HEK293 (cell line): ENCODE measurements at regions of chr17 and their contacts with region 1.

Region 1: DNA sequence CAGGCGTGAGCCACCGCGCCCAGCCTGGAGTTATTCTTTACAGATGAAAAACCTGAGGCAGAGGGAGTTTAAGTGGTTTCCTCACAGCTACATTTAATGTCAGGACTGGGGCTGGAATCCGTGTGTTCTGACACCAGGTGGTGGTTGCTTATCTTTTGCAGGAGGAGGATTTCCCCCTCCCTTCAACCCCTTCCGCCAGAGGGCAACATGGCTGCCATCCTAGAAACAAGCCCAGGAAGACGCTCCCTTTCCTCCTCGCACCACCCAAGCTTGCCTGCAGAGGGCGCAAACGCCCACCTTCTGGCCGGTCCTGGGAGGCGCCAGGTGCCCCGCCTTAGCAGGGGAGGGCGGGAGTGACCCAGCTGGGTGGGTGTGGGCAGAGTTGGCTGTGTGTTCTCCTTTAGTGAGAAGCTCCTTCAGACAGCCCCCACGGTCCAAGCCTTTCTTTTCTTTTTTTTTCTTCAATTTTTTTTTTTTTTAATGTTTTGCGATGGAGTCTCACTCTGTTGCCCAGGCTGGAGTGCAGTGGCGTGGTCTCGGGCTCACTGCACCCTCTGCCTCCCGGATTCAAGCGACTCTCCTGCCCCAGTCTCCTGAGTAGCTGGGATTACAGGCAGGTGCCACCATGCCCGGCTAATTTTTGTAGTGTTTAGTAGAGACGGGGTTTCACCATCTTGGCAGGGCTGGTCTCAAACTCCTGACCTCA is 9.9 kb upstream of the RAP1GAP2 start:
- H3K4me3 ChIP-seq: no peak overlapping the region
- H3K27ac ChIP-seq: no peak overlapping the region
- H3K4me1 ChIP-seq: no peaks in the 10 kb centered on the region
- CTCF ChIP-seq: peak; percentile 96

Region 2: DNA sequence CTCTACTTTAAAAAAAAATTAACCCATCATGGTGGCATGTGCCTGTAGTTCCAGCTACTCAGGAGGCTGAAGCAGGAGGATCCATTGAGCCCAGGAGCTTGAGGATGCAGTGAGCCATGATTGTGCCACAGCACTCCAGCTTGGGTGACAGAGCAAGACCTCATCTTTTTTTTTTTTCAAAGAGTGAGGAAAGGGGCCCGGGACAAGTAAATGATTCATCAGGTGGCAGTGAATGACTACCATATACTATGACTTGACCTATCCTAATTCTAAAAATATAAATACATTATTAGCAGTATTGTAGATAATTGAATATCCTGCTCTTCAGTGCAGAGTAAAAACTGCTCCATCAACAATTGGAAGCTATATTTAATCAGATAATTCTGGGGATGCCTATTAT is 130.0 kb before region 1 on chr17:
- CTCF ChIA-PET with region 1: no interaction called
- POLR2A ChIA-PET with region 1: no interaction called
- H3K4me3 ChIP-seq: no peak overlapping the region
- H3K27ac ChIP-seq: no peak overlapping the region
- H3K4me1 ChIP-seq: peaks cover 9% of the 10 kb centered on the region
- CTCF ChIP-seq: no peak

Region 3: DNA sequence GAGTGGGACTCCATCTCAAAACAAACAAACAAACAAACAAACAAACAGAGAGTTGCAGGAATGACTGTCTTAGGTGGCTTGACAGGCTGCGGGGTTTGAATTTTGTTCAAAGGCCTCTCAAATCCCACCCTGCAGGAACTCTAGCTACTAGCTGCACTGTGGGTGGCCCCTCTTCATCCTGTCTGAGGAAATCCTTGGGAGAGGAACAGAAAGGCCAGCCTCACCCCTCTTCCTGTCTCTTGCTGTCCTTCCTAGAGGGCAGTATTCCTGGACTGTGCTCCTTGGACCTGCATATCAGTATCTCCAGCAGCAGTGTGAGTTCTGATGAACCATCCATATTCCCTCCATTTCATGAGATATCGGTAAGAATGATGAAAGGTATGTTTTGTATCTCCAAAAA is 34.8 kb before region 1 on chr17:
- CTCF ChIA-PET with region 1: no interaction called
- POLR2A ChIA-PET with region 1: no interaction called
- H3K4me3 ChIP-seq: no peak overlapping the region
- H3K27ac ChIP-seq: no peak overlapping the region
- H3K4me1 ChIP-seq: peaks cover 3% of the 10 kb centered on the region
- CTCF ChIP-seq: no peak

Region 4: GRCh38 chr17:2801841-2802240 is 15.5 kb after region 1 on chr17:
- CTCF ChIA-PET with region 1: interaction called, 11 read pairs
- POLR2A ChIA-PET with region 1: no interaction called
- H3K4me3 ChIP-seq: no peak overlapping the region
- H3K27ac ChIP-seq: no peak overlapping the region
- H3K4me1 ChIP-seq: no peaks in the 10 kb centered on the region
- CTCF ChIP-seq: no peak

Region 5: DNA sequence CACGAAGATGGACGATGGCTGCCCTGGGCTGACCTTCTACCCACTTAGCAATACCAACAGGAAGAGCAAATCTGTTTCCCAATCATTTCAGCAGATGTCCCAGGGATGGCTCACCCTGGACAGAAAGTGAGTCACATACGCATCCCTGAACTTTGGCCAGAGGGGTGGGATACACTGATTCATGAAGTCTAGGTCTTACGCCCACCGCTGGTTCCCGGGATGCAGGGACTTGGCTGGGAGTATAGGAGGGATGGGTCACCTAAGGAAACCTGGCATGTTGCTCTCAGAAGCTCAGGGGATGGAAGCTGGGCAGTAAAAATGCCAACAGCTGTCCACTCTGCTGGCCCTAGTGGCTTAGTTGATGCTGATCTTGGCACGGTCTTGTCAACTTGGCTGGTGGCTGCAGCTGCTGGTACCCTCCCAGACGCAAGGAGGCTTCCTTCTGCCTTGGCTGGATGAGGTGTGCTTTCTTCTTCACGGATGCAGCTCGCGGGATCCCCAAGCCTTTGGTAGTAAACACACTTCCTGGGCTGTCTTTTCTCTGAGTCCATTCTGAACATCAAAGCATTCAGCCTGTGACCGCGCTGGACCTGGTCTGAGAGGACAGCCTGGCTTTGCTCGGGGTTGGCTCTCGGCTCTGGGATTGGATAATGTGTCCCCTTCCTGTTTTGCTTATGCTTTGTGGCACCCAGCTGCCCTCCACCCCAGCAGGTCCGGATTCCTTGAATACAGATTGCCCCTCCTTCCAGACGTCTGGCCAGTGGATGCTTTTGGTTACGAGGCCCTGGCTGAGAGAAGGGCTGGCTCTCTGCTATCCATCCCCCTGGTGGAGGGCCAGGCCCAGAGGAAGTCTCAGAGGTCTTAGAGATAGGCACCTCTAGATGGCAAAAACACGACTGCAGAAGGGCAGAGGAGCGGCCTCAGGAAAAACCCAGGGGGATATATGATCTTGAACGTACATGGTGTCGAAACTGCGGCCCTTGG is 81.4 kb after region 1 on chr17:
- CTCF ChIA-PET with region 1: no interaction called
- POLR2A ChIA-PET with region 1: no interaction called
- H3K4me3 ChIP-seq: no peak overlapping the region
- H3K27ac ChIP-seq: no peak overlapping the region
- H3K4me1 ChIP-seq: no peaks in the 10 kb centered on the region
- CTCF ChIP-seq: no peak